Left lung (tissue), 14 donors: ENCODE measurements at regions of chr17 and their contacts with region 1.

Region 1: GRCh38 chr17:44633998-44634397 is 22.3 kb upstream of the MEIOC start:
- DNase-seq: no peak
- ATAC-seq: no peak
- H3K4me3 ChIP-seq: no peak overlapping the region
- H3K27ac ChIP-seq: no peak overlapping the region
- H3K4me1 ChIP-seq: no peaks in the 10 kb centered on the region
- H3K27me3 ChIP-seq: peaks cover 0 to 23% of the 10 kb centered on the region in 2 donors
- CTCF ChIP-seq: no peak

Region 2: DNA sequence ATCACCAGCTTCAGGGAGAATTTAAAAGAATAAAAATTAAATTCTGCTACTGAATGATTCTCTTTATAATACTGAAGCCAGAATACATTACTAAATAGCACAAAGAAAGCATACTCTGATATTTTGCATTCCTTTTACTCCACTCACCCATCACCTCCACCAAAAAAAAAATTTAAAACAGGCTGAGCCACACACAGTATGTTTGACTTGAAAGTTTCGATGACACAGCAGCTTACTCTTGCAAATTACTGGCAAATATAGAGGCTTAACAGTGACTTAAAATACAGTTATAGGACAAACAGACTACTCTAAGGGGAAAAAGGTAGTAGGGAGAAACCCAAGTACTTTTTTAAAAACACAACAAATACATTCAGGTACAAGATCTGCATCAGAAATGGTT is 170.0 kb before region 1 on chr17:
- intact Hi-C with region 1: no loop called
- DNase-seq: no peak
- ATAC-seq: peak; percentile 69
- H3K4me3 ChIP-seq: no peak overlapping the region
- H3K27ac ChIP-seq: no peak overlapping the region
- H3K4me1 ChIP-seq: peaks cover 17 to 18% of the 10 kb centered on the region in 2 donors
- H3K27me3 ChIP-seq: no peaks in the 10 kb centered on the region
- CTCF ChIP-seq: no peak

Region 3: DNA sequence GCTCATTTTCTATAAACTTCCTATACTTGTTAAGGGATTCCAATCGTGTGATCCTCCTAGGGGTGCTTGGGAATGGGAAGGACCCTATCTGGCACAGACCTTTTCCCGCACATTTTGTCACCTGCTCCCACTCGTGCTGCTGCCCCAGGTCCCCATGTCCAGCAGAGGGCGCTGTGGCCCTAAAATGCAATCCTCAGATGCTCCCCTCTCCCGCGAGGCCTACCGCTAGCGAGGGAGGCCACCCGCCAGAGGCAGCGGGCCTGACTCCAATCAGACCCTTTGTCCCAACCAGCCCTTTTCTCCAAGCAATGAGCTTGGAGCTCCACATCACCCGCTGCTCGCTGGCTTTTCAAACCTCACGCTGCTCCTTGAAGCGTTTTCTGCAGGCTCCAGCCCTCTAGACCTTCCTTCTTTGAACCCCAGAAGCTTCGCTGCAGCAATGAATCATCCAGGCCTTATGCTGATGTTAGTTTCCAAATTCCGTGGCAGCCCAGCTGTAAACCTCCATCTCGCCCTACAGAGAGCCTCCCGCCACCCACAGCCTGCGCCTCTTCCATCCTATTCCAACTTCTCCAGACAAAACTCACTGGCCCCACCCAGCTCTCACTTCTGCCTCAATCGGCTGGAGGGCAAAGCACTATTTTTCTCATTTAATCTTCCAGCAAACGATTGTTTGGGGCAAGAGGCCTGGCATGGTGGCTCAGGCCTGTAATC is 100.3 kb before region 1 on chr17:
- intact Hi-C with region 1: loop called in 1 of 2 experiments (anchors 5 kb)
- DNase-seq: peak; percentile 87 to 94 (median 90)
- ATAC-seq: peak; percentile 95
- H3K4me3 ChIP-seq: no peak overlapping the region
- H3K27ac ChIP-seq: peak overlapping the region; percentile 20 to 70
- H3K4me1 ChIP-seq: peaks cover 0 to 16% of the 10 kb centered on the region in 2 donors
- H3K27me3 ChIP-seq: peaks cover 0 to 9% of the 10 kb centered on the region in 2 donors
- CTCF ChIP-seq: peak; percentile 92 to 96

Region 4: GRCh38 chr17:44568945-44569858 is 64.8 kb before region 1 on chr17:
- intact Hi-C with region 1: no loop called
- DNase-seq: no peak
- ATAC-seq: no peak
- H3K4me3 ChIP-seq: no peak overlapping the region
- H3K27ac ChIP-seq: no peak overlapping the region
- H3K4me1 ChIP-seq: no peaks in the 10 kb centered on the region
- H3K27me3 ChIP-seq: peaks cover 0 to 24% of the 10 kb centered on the region in 2 donors
- CTCF ChIP-seq: no peak